Activated CD4-positive, alpha-beta T cell treated with anti-CD3 and anti-CD28 coated beads for 36 hours (primary cell): ENCODE measurements at regions of chr13 and their contacts with region 1.

Region 1: DNA sequence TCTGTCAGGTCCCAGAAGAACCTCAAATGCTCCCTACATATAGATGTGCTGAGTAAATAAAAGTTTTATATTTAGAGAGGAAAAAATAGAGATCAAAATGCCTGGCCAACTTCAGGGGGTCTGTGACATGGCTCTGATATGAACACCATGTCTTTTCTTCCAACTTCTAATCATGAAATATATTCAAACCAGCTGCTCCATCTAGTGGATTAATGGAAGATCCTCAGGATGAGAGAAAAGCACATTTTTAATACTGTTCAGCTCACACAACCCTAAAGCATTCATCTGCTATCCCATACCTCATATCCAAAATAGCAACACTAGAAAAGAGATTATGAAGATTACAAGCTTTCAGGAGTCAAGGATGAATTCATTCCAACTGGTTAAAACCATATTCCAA is 56.0 kb upstream of the DOCK9 start:
- DNase-seq: no peak
- ATAC-seq: peak; percentile 56
- H3K4me3 Mint-ChIP-seq: no peak overlapping the region
- H3K27ac Mint-ChIP-seq: no peak overlapping the region
- H3K4me1 Mint-ChIP-seq: peaks cover 51% of the 10 kb centered on the region
- H3K27me3 Mint-ChIP-seq: no peaks in the 10 kb centered on the region

Region 2: DNA sequence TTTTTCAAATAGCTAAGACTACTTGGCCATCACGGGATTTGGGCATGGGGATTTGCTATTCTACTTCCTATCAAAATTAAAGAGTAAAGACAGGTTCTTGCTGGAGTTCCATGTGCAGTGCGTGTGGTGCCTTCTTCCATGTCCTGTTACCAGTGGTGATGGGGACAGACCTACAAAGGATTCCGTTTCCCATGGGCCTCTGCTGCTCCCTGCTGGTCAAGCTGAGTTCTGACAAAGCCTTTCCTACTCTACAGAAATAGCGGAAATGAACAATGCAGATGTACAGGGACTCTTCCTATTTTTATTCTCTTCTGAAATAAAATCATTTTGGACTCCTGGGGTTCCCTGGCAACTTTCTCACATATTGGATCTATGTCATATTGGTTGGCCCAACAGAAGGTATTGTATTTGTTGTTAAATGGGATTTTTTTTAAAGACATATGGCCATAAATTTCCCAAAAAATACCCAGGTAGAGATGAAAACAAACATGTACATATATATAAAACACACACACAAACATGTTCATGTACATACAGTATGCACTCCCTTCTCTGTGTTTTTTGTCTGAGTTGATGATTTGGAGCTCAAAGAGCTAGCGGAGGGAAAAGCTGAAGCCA is 190.8 kb before region 1 on chr13:
- CTCF ChIA-PET with region 1: interaction called, 12 read pairs
- POLR2A ChIA-PET with region 1: no interaction called
- intact Hi-C with region 1: loop called (anchors 1 to 5 kb)
- DNase-seq: peak; percentile 86
- ATAC-seq: peak; percentile 88
- H3K4me3 Mint-ChIP-seq: no peak overlapping the region
- H3K27ac Mint-ChIP-seq: no peak overlapping the region
- H3K4me1 Mint-ChIP-seq: no peaks in the 10 kb centered on the region
- H3K27me3 Mint-ChIP-seq: no peaks in the 10 kb centered on the region

Region 3: DNA sequence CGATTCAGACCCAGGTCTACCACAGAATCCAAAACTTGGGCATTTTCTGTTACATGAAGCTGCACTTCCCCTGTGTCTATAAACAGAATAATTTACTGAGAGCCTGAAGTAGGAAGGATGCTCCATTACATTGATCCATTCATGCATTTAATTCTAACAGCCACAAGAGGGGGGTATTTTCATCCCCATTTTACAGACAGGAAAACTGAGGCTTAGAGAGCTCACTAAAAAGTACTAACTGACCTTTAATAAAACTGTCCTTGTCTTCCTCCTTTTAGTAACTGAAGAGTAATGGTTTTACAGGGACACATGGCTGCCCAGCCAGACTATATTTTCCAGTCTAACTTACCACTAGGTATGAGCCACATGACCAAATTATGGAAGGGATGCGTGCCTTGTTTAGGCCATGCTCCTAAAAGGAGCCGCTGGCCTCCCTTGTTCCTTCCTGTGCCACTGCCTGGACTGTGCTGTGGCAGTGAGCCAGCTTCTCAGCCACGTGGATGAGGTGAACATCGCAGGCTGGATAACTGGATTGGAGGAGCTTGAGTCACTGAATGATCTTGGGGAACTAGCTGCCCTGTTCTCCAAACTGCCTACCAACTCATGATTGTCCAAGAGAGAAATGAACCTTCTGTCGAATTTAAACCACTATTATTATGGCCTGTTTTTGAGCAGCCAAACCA is 164.3 kb before region 1 on chr13:
- CTCF ChIA-PET with region 1: interaction called, 22 read pairs
- POLR2A ChIA-PET with region 1: no interaction called
- intact Hi-C with region 1: loop called (anchors 2 to 5 kb)
- DNase-seq: no peak
- ATAC-seq: no peak
- H3K4me3 Mint-ChIP-seq: no peak overlapping the region
- H3K27ac Mint-ChIP-seq: no peak overlapping the region
- H3K4me1 Mint-ChIP-seq: peaks cover 8% of the 10 kb centered on the region
- H3K27me3 Mint-ChIP-seq: no peaks in the 10 kb centered on the region

Region 4: GRCh38 chr13:98910501-98910951 is 123.3 kb before region 1 on chr13:
- CTCF ChIA-PET with region 1: no interaction called
- POLR2A ChIA-PET with region 1: no interaction called
- intact Hi-C with region 1: loop called in 1 of 2 experiments (anchors 5 kb)
- DNase-seq: peak; percentile 56
- ATAC-seq: peak; percentile 89
- H3K4me3 Mint-ChIP-seq: peak overlapping the region; percentile 2
- H3K27ac Mint-ChIP-seq: peak overlapping the region; percentile 90
- H3K4me1 Mint-ChIP-seq: peaks cover 51% of the 10 kb centered on the region
- H3K27me3 Mint-ChIP-seq: no peaks in the 10 kb centered on the region

Region 5: DNA sequence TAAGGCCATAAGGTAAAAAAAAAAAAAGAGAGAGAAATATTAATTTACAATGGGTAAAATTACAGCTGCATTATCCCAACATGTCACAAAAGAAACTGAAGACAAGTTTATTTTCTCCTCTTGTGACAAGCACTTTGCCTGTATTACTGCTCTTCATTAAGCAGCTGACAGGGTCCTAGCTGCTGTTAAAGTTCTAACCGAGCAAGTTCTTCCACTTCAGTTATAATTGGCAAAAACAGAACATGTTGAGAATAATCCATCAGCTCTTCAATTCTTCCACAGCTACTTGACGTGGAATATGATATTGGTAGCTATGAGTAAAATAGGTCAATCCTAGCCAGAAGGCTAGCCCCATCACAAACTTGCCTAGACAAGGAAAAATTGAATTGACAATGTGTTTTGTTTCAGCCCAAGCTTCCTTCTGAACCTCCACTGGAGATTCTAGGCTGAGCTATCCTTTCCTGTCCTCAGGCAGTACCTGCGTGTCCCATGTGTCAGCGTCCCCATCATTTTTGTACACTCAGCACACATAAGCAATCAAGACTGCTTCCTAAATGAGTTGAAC is 23.7 kb before region 1 on chr13:
- CTCF ChIA-PET with region 1: interaction called, 10 read pairs
- POLR2A ChIA-PET with region 1: no interaction called
- intact Hi-C with region 1: no loop called
- DNase-seq: no peak
- ATAC-seq: no peak
- H3K4me3 Mint-ChIP-seq: no peak overlapping the region
- H3K27ac Mint-ChIP-seq: no peak overlapping the region
- H3K4me1 Mint-ChIP-seq: peaks cover 27% of the 10 kb centered on the region
- H3K27me3 Mint-ChIP-seq: no peaks in the 10 kb centered on the region

Region 6: GRCh38 chr13:99051768-99052455 is 18.1 kb after region 1 on chr13:
- CTCF ChIA-PET with region 1: interaction called, 35 read pairs
- POLR2A ChIA-PET with region 1: no interaction called
- intact Hi-C with region 1: no loop called
- DNase-seq: no peak
- ATAC-seq: peak; percentile 16
- H3K4me3 Mint-ChIP-seq: peak overlapping the region; percentile 15
- H3K27ac Mint-ChIP-seq: peak overlapping the region; percentile 44
- H3K4me1 Mint-ChIP-seq: peaks cover 75% of the 10 kb centered on the region
- H3K27me3 Mint-ChIP-seq: no peaks in the 10 kb centered on the region

Region 7: DNA sequence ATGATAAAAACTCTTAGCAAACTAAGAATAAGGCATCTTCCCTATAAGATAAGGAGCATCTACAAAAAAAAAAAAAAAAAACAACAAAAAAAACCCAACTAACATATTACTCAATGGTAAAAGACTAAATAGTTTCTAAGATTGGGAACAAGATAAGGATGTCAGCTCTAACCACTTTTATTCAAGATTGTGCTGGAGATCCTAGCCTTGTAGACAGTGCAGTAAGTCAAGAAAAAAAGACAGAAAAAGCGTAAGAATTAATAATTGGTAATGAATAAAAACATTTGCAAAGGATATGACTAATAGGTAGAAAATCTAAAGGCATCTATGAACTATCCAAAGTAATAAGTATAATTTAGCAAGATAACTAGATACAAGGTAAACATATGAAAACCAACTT is 980.8 kb after region 1 on chr13:
- CTCF ChIA-PET with region 1: no interaction called
- POLR2A ChIA-PET with region 1: no interaction called
- intact Hi-C with region 1: no loop called
- DNase-seq: no peak
- ATAC-seq: no peak
- H3K4me3 Mint-ChIP-seq: no peak overlapping the region
- H3K27ac Mint-ChIP-seq: no peak overlapping the region
- H3K4me1 Mint-ChIP-seq: no peaks in the 10 kb centered on the region
- H3K27me3 Mint-ChIP-seq: peaks cover 12% of the 10 kb centered on the region